Activated naive CD4-positive, alpha-beta T cell treated with anti-CD3 and anti-CD28 coated beads for 36 hours (primary cell): ENCODE measurements at regions of chrX and their contacts with region 1.

Region 1: DNA sequence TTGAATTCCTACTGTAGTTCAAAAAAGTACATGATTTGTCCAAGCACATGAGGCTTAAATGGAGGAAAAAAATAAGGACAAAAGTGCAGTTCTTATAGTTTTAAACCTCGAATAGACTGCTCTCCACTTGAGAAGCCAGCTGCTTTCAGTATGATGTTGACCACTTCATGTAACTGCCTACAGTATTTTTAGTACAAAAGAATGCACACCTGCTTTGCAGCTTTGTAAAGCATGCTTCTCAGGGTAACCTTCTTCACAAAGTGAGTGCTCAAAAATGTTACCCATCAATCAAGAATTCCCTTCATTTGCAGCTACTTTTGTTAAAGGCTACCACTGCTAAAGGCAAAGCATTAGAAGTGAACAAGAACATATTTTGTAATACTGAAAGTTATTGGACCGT is 83.4 kb upstream of the FAM47B start:
- DNase-seq: no peak
- H3K4me3 Mint-ChIP-seq: no peak overlapping the region
- H3K27ac Mint-ChIP-seq: no peak overlapping the region
- H3K4me1 Mint-ChIP-seq: no peaks in the 10 kb centered on the region
- H3K27me3 Mint-ChIP-seq: no peaks in the 10 kb centered on the region

Region 2: GRCh38 chrX:33109858-33110257 is 1749.3 kb before region 1 on chrX:
- CTCF ChIA-PET with region 1: no interaction called
- intact Hi-C with region 1: no loop called
- DNase-seq: no peak
- H3K4me3 Mint-ChIP-seq: no peak overlapping the region
- H3K27ac Mint-ChIP-seq: no peak overlapping the region
- H3K4me1 Mint-ChIP-seq: no peaks in the 10 kb centered on the region
- H3K27me3 Mint-ChIP-seq: no peaks in the 10 kb centered on the region

Region 3: GRCh38 chrX:34790026-34790425 is 69.2 kb before region 1 on chrX:
- CTCF ChIA-PET with region 1: no interaction called
- intact Hi-C with region 1: no loop called
- DNase-seq: no peak
- H3K4me3 Mint-ChIP-seq: no peak overlapping the region
- H3K27ac Mint-ChIP-seq: no peak overlapping the region
- H3K4me1 Mint-ChIP-seq: no peaks in the 10 kb centered on the region
- H3K27me3 Mint-ChIP-seq: no peaks in the 10 kb centered on the region

Region 4: DNA sequence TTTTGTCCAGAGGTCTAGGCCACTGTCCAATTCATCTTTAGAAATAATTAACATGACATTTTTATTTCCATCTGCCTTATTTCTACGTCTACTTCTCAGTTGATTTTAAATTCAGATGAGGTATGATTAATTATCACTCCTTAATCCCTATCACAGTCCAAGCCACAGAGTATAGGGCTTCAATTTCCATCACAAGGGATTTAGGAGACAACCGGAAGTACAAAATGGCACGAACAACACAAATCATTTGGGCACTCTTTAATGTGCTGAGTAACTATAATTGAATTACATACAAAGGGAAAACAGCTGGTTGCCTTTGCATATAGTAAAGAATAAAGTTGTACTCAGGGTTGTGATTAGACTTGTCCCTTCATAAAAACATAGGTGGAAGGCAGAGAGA is 648.5 kb after region 1 on chrX:
- CTCF ChIA-PET with region 1: no interaction called
- intact Hi-C with region 1: loop called (anchors 5 kb)
- DNase-seq: no peak
- H3K4me3 Mint-ChIP-seq: no peak overlapping the region
- H3K27ac Mint-ChIP-seq: no peak overlapping the region
- H3K4me1 Mint-ChIP-seq: no peaks in the 10 kb centered on the region
- H3K27me3 Mint-ChIP-seq: no peaks in the 10 kb centered on the region